ENCODE measurements at regions of chr9 and their contacts with region 1.

Region 1: GRCh38 chr9:127360829-127361228 is 36.1 kb upstream of the SLC2A8 start:
- DNase-seq: peak; percentile 38 to 40
- ATAC-seq: peak; percentile 90 to 91
- H3K4me3 ChIP-seq: no peak overlapping the region
- H3K27ac ChIP-seq: 0 out of 6 replicates have a peak overlapping the region, but pooled peaks of 1 of the 2 experiments have one; percentile 8
- H3K4me1 ChIP-seq: no peaks in the 10 kb centered on the region
- CTCF ChIP-seq: peak; percentile 31; the same call in 2 of the 3 replicates
- EP300 ChIP-seq: no peak
- POLR2A ChIP-seq: no peak
- RAD21 ChIP-seq: peak; percentile 52 to 71; a peak in 4 of 5 replicates

Region 2: DNA sequence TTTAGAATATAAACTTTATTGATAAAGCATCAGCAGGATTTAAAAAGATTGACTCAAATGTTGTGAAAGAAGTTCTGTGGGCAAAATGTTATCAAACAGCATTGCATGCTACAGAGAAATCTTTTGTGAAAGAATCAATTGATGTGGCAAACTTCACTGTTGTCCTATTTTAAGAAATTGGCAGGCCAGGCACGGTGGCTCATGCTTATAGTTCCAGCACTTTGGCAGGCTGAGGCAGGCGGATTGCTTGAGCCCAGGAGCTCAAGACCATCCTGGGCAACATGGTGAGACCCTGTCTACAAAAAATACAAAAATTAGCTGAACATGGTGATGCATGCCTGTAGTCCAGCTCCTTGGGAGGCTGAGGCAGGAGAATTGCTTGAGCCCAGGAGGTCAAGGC is 538.6 kb before region 1 on chr9:
- CTCF ChIA-PET with region 1: no interaction called
- POLR2A ChIA-PET with region 1: no interaction called
- DNase-seq: no peak
- ATAC-seq: no peak
- H3K4me3 ChIP-seq: no peak overlapping the region
- H3K27ac ChIP-seq: no peak overlapping the region
- H3K4me1 ChIP-seq: peaks cover 6% of the 10 kb centered on the region; the same call in 2 of the 3 replicates
- CTCF ChIP-seq: no peak
- EP300 ChIP-seq: no peak
- POLR2A ChIP-seq: no peak
- RAD21 ChIP-seq: no peak

Region 3: DNA sequence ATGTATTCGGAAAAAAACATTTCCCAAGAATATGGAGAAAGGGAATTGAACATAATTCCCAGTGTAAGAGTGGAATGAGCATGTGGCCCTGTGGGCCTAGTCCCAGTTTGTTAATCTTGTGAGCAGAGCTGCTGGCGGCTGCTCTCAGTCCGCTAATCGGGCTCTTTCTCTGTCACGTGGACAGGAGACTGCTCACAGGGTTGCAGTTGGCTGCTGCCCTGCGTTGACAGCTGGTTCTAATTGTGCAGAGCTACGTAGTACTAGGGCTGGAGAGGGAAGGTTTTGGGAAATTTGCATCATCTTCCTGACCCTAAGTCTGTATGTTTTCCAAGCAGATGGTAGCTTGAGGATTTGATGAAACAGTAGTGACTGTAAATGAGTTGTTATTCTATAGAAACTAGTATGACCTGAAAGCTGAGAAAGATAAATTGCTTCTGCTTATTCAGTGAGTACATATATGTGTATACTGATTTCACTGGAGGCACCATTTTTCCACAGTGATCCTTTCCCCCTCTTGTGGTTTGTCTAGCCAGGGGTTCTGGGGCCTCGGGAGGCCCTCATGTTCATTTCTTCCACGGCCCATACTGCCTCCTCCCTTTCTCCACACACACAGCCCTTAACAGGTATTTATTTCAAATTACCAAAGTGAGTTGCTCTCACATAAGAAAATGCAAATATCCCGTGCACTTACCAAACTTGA is 339.0 kb before region 1 on chr9:
- CTCF ChIA-PET with region 1: no interaction called
- POLR2A ChIA-PET with region 1: no interaction called
- DNase-seq: no peak
- ATAC-seq: no peak
- H3K4me3 ChIP-seq: no peak overlapping the region
- H3K27ac ChIP-seq: no peak overlapping the region
- H3K4me1 ChIP-seq: no peaks in the 10 kb centered on the region
- CTCF ChIP-seq: no peak
- EP300 ChIP-seq: no peak
- POLR2A ChIP-seq: no peak
- RAD21 ChIP-seq: no peak

Region 4: DNA sequence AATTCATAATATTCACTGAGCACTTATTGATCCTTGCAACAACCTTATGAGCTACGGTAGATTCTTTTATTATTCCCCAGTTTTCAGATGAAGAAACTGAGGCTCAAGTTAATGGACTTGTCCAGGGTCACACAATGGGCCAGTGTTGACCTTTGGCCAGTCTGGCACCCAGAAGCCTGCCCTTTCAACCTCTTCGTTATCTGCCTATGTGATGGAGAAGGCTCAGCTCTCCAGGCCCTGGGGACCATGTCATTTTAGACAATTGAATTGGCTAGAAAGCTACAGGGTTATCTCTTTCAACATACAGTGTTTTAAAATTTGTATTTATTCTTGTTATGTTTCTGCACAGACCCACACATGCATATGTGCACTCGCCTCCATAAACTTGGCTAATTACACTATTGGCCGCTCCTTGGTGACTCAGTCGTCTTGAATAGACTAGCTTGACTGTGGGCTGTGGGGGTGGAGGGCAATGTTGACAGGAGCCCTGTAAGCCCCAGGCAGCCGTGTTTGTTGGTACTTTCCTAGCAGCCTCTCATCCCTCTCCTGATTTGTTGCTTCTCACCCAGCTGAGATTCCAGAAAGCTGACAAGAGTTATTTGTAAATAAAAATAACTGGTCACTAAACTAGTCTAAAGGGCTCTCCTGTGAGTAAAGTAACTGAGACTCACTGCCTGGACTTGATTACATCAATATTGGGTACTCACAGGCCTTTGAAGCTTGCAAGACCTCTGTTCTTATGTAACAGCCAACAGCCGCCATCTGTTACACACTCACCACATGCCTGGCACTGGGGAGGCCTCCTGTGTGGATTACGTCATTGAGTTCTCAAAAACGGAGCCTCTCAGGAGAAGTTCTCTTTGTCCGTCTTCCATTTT is 229.9 kb before region 1 on chr9:
- CTCF ChIA-PET with region 1: no interaction called
- POLR2A ChIA-PET with region 1: no interaction called
- DNase-seq: no peak
- ATAC-seq: no peak
- H3K4me3 ChIP-seq: no peak overlapping the region
- H3K27ac ChIP-seq: no peak overlapping the region
- H3K4me1 ChIP-seq: peaks cover 14% of the 10 kb centered on the region
- CTCF ChIP-seq: no peak
- EP300 ChIP-seq: no peak
- POLR2A ChIP-seq: no peak
- RAD21 ChIP-seq: no peak

Region 5: DNA sequence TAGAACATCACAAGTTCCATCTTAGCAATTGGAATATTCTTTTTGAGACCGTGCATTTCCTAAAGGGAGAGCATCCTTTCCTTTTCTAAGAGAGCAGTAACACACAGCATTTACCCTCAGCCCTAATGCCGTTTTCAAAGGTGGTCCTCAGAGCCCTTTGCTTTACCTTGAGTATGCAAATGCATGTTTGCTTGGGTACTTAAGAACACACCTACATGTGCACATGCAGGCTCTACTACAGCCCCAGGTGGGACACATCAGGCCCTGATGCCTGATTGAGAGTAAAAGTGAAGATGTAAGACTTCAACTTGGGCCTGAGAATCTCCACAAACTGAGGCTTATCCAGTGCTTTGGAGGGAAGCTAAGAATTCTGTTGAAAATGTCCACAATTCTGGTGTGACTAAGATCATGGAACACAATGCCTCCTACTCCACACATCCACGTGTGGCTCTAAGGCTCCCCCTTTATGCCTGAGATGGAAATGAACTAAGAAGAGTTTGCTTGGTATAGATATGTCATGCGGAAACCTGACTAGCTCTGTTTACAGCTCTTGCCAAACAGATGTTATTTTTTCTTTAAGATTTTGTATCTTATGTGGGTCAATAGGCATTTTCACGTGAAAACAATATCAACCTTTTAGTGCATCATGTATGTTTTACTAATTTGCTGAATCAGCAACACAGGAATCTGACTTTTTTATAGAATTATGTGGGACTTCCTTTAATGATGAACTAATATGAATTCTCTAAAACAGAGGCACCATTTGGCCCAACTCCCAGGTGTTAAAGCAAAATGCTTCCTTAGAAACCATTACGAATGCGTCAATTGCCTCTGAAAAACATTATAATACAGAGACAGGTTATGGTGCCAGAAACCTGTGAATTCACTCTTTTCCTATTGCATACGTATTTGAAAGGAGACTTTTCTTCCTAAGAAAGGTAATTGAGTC is 12.7 kb before region 1 on chr9:
- CTCF ChIA-PET with region 1: interaction called, 10 read pairs
- POLR2A ChIA-PET with region 1: no interaction called
- DNase-seq: peak; percentile 55 to 71
- ATAC-seq: peak; percentile 94 to 95
- H3K4me3 ChIP-seq: no peak overlapping the region
- H3K27ac ChIP-seq: no peak overlapping the region; a peak in 1 of 6 replicates
- H3K4me1 ChIP-seq: peaks cover 4% of the 10 kb centered on the region; the same call in 1 of the 3 replicates
- CTCF ChIP-seq: peak; percentile 73
- EP300 ChIP-seq: no peak
- POLR2A ChIP-seq: no peak
- RAD21 ChIP-seq: peak; percentile 80 to 91

Region 6: GRCh38 chr9:127406799-127407509 is 46.1 kb after region 1 on chr9:
- CTCF ChIA-PET with region 1: interaction called, 13 read pairs
- POLR2A ChIA-PET with region 1: no interaction called
- DNase-seq: no peak
- ATAC-seq: peak in 1 of 2 experiments; percentile 32; a peak in 4 of 6 replicates
- H3K4me3 ChIP-seq: no peak overlapping the region
- H3K27ac ChIP-seq: no peak overlapping the region
- H3K4me1 ChIP-seq: no peaks in the 10 kb centered on the region
- CTCF ChIP-seq: no peak
- EP300 ChIP-seq: no peak
- POLR2A ChIP-seq: no peak
- RAD21 ChIP-seq: no peak

Measured in A549 (cell line).